Activated CD4-positive, alpha-beta T cell treated with anti-CD3 and anti-CD28 coated beads for 36 hours (primary cell): ENCODE measurements at regions of chr2 and their contacts with region 1.

Region 1: GRCh38 chr2:44244129-44244871 is 31.0 kb upstream of the SLC3A1 start:
- DNase-seq: peak; percentile 73
- ATAC-seq: peak; percentile 86
- H3K4me3 Mint-ChIP-seq: peak overlapping the region; percentile 67
- H3K27ac Mint-ChIP-seq: peak overlapping the region; percentile 47
- H3K4me1 Mint-ChIP-seq: peaks cover 16% of the 10 kb centered on the region
- H3K27me3 Mint-ChIP-seq: no peaks in the 10 kb centered on the region

Region 2: DNA sequence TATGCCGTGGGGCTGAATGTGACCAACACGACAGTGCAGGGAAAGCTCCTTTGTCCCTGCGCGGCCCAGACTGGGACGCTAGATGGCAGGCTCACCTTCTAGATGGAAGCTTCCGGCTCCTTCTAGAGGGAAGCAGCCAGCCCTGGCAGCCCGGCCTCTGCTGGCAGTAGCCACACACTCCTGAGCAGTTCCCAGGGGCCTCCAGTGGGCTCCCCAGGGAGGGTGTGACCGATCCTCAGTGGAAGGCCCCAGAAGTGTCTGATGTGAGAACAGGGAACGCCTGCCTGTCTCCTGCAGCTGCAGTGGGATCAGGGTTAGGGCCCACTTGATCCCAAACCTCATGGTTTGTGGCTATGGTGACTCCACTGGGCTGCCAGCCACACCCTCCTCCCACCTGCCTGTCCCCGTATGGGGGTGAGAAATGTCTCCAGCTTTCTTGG is 200.0 kb before region 1 on chr2:
- CTCF ChIA-PET with region 1: interaction called, 12 read pairs
- POLR2A ChIA-PET with region 1: no interaction called
- intact Hi-C with region 1: loop called (anchors 1 to 5 kb)
- DNase-seq: peak; percentile 91
- ATAC-seq: peak; percentile 100
- H3K4me3 Mint-ChIP-seq: no peak overlapping the region
- H3K27ac Mint-ChIP-seq: no peak overlapping the region
- H3K4me1 Mint-ChIP-seq: no peaks in the 10 kb centered on the region
- H3K27me3 Mint-ChIP-seq: peaks cover 2% of the 10 kb centered on the region

Region 3: DNA sequence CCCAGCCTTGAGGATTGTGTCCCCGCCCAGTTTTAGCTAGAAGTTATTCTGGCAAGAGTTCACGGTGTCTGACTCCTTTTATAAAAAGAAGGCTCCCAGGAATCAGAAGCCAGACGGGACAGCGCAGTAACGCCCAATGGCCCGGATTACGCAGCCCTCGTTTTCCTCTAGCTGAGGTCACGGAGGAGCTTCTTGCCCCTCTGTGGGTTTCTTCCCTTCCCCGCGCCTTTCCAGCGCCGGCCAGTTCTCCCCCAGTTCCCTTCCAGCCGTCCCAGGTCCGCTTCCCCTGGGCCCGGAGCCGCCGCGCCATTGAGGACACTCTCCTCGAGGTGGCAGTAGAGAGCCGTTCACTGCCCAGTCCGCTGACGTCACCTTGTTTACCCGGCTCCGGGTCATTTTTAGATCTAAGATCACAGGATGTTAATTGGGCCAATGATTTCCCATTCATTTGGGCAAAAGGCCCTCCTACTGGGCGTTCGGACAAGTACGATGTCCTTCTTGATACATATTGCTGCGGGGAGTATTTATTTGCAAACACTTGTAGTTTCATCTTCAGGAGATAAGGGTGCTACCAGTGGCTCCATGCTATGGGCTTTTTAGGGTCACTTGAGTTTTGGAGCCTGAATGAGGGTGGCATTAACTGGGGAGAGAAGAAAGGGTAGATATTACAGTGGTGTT is 157.1 kb before region 1 on chr2:
- CTCF ChIA-PET with region 1: interaction called, 14 read pairs
- POLR2A ChIA-PET with region 1: no interaction called
- intact Hi-C with region 1: loop called (anchors 1 to 5 kb)
- DNase-seq: peak; percentile 91
- ATAC-seq: peak; percentile 90
- H3K4me3 Mint-ChIP-seq: peak overlapping the region; percentile 67
- H3K27ac Mint-ChIP-seq: peak overlapping the region; percentile 93
- H3K4me1 Mint-ChIP-seq: peaks cover 22% of the 10 kb centered on the region
- H3K27me3 Mint-ChIP-seq: no peaks in the 10 kb centered on the region

Region 4: GRCh38 chr2:44201648-44202165 is 42.6 kb before region 1 on chr2:
- CTCF ChIA-PET with region 1: interaction called, 10 read pairs
- POLR2A ChIA-PET with region 1: no interaction called
- intact Hi-C with region 1: no loop called
- DNase-seq: no peak
- ATAC-seq: no peak
- H3K4me3 Mint-ChIP-seq: no peak overlapping the region
- H3K27ac Mint-ChIP-seq: no peak overlapping the region
- H3K4me1 Mint-ChIP-seq: peaks cover 58% of the 10 kb centered on the region
- H3K27me3 Mint-ChIP-seq: no peaks in the 10 kb centered on the region

Region 5: DNA sequence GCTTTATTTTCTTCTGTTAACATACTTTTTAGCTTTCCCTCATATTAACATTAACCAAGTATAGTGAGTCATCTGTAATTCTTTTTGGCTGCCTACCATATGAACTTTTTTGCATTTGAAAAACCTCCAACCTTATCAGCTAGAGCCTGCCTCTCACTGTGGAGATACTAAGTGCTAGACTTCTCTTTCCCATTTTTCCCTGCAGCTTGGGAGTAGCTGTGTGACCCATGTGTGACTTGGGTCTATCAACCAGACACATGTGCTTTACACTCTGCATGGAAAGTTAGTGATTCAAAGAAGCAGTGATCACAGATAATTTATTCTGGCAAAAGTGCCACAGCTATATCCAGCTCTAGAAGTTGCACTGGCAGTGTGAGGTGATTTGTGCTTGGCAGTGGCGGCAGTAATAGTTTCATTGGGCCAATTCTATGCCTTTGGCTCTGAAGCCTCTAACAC is 80.7 kb after region 1 on chr2:
- CTCF ChIA-PET with region 1: interaction called, 3 read pairs
- POLR2A ChIA-PET with region 1: interaction called, 10 read pairs
- intact Hi-C with region 1: loop called in 1 of 2 experiments (anchors 5 kb)
- DNase-seq: no peak
- ATAC-seq: no peak
- H3K4me3 Mint-ChIP-seq: no peak overlapping the region
- H3K27ac Mint-ChIP-seq: no peak overlapping the region
- H3K4me1 Mint-ChIP-seq: peaks cover 3% of the 10 kb centered on the region
- H3K27me3 Mint-ChIP-seq: no peaks in the 10 kb centered on the region

Region 6: GRCh38 chr2:44330801-44331200 is 86.5 kb after region 1 on chr2:
- CTCF ChIA-PET with region 1: no interaction called
- POLR2A ChIA-PET with region 1: no interaction called
- intact Hi-C with region 1: loop called in 1 of 2 experiments (anchors 5 kb)
- DNase-seq: no peak
- ATAC-seq: no peak
- H3K4me3 Mint-ChIP-seq: no peak overlapping the region
- H3K27ac Mint-ChIP-seq: no peak overlapping the region
- H3K4me1 Mint-ChIP-seq: peaks cover 10% of the 10 kb centered on the region
- H3K27me3 Mint-ChIP-seq: no peaks in the 10 kb centered on the region

Region 7: GRCh38 chr2:44342854-44343253 is 98.6 kb after region 1 on chr2:
- CTCF ChIA-PET with region 1: interaction called, 6 read pairs
- POLR2A ChIA-PET with region 1: no interaction called
- intact Hi-C with region 1: loop called in 1 of 2 experiments (anchors 1 kb)
- DNase-seq: peak; percentile 33
- ATAC-seq: no peak
- H3K4me3 Mint-ChIP-seq: no peak overlapping the region
- H3K27ac Mint-ChIP-seq: no peak overlapping the region
- H3K4me1 Mint-ChIP-seq: no peaks in the 10 kb centered on the region
- H3K27me3 Mint-ChIP-seq: no peaks in the 10 kb centered on the region